ENCODE measurements at regions of chr2 and their contacts with region 1.

Region 1: DNA sequence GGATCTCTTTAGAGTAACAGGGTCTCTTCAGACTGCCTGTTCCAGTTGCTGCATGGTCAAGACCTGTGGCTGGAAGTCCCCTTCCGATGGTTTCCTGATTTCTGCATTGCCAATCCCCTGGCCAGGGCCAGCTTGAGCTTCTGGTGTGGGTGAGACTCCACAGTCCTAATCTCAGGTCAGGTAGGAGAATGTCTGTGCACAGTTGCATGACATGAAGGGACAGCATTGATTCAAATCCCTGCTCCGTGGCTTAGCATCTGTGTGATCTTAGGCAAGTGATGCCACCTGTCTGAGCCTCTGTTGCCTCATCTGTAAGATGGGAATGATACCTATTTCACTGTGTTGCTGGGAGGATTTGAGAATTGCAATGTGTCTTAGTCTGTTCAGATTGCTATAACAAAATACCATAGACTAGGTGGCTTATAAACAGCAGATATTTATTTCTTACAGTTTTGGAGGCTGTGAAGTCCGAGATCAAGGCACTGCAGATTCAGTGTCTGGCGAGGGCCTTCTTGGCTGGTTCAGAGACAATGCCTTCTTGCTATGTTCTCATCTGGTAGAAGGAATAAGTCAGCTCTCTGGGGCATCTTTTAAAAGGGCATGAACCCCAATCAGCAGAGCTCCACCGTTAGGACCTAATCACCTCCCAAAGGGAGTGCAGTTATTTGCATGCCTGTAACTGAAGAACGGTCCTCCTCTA is 66.2 kb downstream of the ATOH8 start:
- DNase-seq: no peak
- H3K4me3 ChIP-seq: no peak overlapping the region
- H3K27me3 ChIP-seq: no peaks in the 10 kb centered on the region; the same call in 1 of the 2 replicates
- CTCF ChIP-seq: no peak

Region 2: GRCh38 chr2:85723707-85724360 is 96.1 kb before region 1 on chr2:
- CTCF ChIA-PET with region 1: interaction called, 194 read pairs
- POLR2A ChIA-PET with region 1: interaction called, 3 read pairs
- DNase-seq: no peak
- H3K4me3 ChIP-seq: no peak overlapping the region
- H3K27me3 ChIP-seq: no peaks in the 10 kb centered on the region
- CTCF ChIP-seq: no peak

Measured in BJ (cell line).